HCT116 (cell line): ENCODE measurements at regions of chr11 and their contacts with region 1.

Region 1: GRCh38 chr11:8099291-8099899 is 18.4 kb downstream of the TUB start:
- DNase-seq: peak; percentile 68
- ATAC-seq: peak; percentile 94
- H3K4me3 ChIP-seq: no peak overlapping the region
- H3K27ac ChIP-seq: no peak overlapping the region
- H3K4me1 ChIP-seq: no peaks in the 10 kb centered on the region
- H3K27me3 ChIP-seq: no peaks in the 10 kb centered on the region
- CTCF ChIP-seq: peak; percentile 79 to 90 (median 84)
- POLR2A ChIP-seq: no peak
- RAD21 ChIP-seq: peak; percentile 90

Region 2: DNA sequence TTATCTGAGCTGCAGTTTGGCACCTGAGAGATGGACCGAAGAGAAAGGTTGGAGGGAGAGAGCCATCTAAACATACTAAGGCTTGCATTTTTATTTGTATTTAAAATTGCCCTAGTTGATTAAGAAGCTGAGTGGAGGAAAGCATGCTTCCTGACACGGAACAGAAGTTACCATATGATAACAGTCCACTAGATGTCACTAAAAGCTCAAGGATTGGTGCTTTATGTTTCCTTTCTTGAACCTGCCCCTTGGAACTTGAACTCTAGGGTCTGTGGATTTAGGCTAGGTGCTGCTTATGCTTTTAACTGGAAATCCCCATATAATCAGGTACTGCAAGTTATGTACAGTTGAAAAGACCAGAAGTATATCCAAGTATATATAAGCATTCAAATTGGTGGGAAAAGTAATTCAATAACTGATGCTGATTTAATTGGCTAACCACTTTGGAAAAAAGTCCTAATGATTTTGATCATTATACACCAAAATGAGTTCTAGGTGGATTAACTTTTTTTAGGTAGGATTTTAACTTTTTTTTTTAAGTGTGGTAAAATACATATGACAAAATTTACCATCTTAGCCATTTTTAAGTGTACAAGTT is 1001.1 kb before region 1 on chr11:
- CTCF ChIA-PET with region 1: no interaction called
- POLR2A ChIA-PET with region 1: no interaction called
- RAD21 ChIA-PET with region 1: no interaction called
- intact Hi-C with region 1: loop called (anchors 10 kb)
- DNase-seq: peak; percentile 50
- ATAC-seq: peak; percentile 91
- H3K4me3 ChIP-seq: no peak overlapping the region
- H3K27ac ChIP-seq: no peak overlapping the region
- H3K4me1 ChIP-seq: no peaks in the 10 kb centered on the region
- H3K27me3 ChIP-seq: peaks cover 59% of the 10 kb centered on the region
- CTCF ChIP-seq: peak; percentile 46 to 74 (median 72)
- POLR2A ChIP-seq: no peak
- RAD21 ChIP-seq: peak; percentile 91

Region 3: GRCh38 chr11:7892840-7893254 is 206.5 kb before region 1 on chr11:
- CTCF ChIA-PET with region 1: interaction called, 5 read pairs
- POLR2A ChIA-PET with region 1: no interaction called
- RAD21 ChIA-PET with region 1: no interaction called
- intact Hi-C with region 1: loop called (anchors 10 kb)
- DNase-seq: peak; percentile 22
- ATAC-seq: peak; percentile 90
- H3K4me3 ChIP-seq: no peak overlapping the region
- H3K27ac ChIP-seq: no peak overlapping the region
- H3K4me1 ChIP-seq: no peaks in the 10 kb centered on the region
- H3K27me3 ChIP-seq: peaks cover 30% of the 10 kb centered on the region
- CTCF ChIP-seq: peak; percentile 62 to 73 (median 70); a peak in 5 of 6 replicates
- POLR2A ChIP-seq: no peak
- RAD21 ChIP-seq: peak; percentile 73

Region 4: GRCh38 chr11:7927635-7928034 is 171.8 kb before region 1 on chr11:
- CTCF ChIA-PET with region 1: no interaction called
- POLR2A ChIA-PET with region 1: no interaction called
- RAD21 ChIA-PET with region 1: no interaction called
- intact Hi-C with region 1: no loop called
- DNase-seq: no peak
- ATAC-seq: no peak
- H3K4me3 ChIP-seq: no peak overlapping the region
- H3K27ac ChIP-seq: no peak overlapping the region
- H3K4me1 ChIP-seq: no peaks in the 10 kb centered on the region
- H3K27me3 ChIP-seq: peaks cover 11% of the 10 kb centered on the region
- CTCF ChIP-seq: no peak
- POLR2A ChIP-seq: no peak
- RAD21 ChIP-seq: no peak

Region 5: GRCh38 chr11:8006349-8006977 is 92.9 kb before region 1 on chr11:
- CTCF ChIA-PET with region 1: interaction called, 184 read pairs
- POLR2A ChIA-PET with region 1: interaction called, 6 read pairs
- RAD21 ChIA-PET with region 1: interaction called, 28 to 31 read pairs
- intact Hi-C with region 1: loop called (anchors 1 kb)
- DNase-seq: peak; percentile 54
- ATAC-seq: peak; percentile 97
- H3K4me3 ChIP-seq: no peak overlapping the region
- H3K27ac ChIP-seq: no peak overlapping the region
- H3K4me1 ChIP-seq: no peaks in the 10 kb centered on the region
- H3K27me3 ChIP-seq: no peaks in the 10 kb centered on the region
- CTCF ChIP-seq: peak; percentile 86 to 91 (median 91)
- POLR2A ChIP-seq: no peak
- RAD21 ChIP-seq: peak; percentile 96

Region 6: GRCh38 chr11:8219257-8220021 is 120.0 kb after region 1 on chr11:
- CTCF ChIA-PET with region 1: no interaction called
- POLR2A ChIA-PET with region 1: no interaction called
- RAD21 ChIA-PET with region 1: no interaction called
- intact Hi-C with region 1: no loop called
- DNase-seq: peak; percentile 50
- ATAC-seq: peak; percentile 97
- H3K4me3 ChIP-seq: no peak overlapping the region
- H3K27ac ChIP-seq: no peak overlapping the region
- H3K4me1 ChIP-seq: no peaks in the 10 kb centered on the region
- H3K27me3 ChIP-seq: no peaks in the 10 kb centered on the region
- CTCF ChIP-seq: peak; percentile 46 to 88 (median 73); a peak in 5 of 6 replicates
- POLR2A ChIP-seq: no peak
- RAD21 ChIP-seq: peak; percentile 61

Region 7: DNA sequence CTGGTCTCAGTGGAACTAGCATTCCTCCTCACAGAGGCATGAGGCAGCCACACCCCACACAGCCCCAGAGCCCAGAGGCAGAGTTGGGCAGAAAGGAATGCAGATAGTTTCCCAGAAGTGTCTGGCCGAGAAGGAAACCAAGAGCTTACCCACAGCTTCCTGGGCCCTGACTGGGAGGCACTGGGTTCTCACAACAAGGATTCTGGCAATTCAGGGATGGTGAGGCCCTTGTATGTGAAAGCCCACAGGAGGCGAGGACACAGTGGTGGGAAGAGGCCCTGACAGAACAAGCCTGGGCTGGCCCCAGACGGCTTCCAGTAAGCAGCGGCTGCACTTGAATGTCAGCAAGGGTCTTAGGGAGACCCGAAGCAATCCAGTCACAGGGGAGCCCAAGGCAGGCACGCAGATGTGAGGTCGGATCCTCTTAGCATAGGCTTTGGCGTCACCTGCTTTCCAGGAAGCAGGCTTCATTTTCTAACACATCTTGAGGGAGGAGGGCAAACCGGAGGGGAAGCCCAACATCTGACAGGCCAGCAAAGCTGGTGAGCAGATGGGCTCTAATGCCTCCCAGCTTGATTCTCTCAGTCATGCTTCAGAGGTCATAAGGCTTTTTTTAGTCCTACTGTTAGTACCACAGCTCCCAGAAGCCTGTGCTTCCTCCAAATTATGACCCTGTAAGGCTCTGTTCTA is 733.3 kb after region 1 on chr11:
- CTCF ChIA-PET with region 1: no interaction called
- POLR2A ChIA-PET with region 1: no interaction called
- RAD21 ChIA-PET with region 1: no interaction called
- intact Hi-C with region 1: no loop called
- DNase-seq: no peak
- ATAC-seq: peak; percentile 67
- H3K4me3 ChIP-seq: no peak overlapping the region
- H3K27ac ChIP-seq: peak overlapping the region; percentile 28; the same call in 1 of the 2 replicates
- H3K4me1 ChIP-seq: peaks cover 6 to 13% of the 10 kb centered on the region in 2 experiments
- H3K27me3 ChIP-seq: no peaks in the 10 kb centered on the region
- CTCF ChIP-seq: no peak
- POLR2A ChIP-seq: no peak
- RAD21 ChIP-seq: no peak

Region 8: DNA sequence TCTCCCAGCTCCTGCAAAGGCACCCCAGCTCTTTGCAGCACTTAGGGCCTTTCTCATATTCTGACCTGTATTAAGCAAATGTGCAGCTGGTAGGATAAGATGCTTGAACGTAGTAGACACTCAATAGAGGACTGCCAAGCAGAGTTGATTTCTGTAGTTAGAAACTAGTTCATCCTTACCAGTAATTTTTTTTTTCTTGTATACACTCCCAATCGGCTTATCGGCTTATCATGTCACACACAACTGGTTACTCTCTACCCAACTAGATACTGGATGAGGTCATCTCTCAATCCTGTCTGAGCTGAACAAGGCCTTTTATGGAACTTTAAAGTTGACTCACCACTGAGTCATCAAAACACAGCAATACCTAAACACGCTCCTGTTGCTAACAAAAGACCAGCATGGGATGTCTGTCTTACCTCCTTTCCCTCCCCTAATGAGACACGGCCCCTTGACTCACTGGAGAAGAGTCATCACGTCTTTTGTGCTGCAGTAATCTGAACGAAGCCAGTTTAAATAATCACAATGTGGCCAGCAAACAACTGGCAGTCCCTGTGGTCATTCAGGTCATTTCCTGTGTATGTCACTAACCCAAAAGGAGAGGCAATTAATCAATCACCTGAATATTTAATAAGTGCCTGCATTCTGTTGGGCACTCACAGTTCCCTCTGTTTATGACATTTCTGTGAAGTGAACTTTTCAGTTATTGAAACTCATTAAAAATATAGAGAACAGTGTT is 1466.6 kb after region 1 on chr11:
- CTCF ChIA-PET with region 1: no interaction called
- POLR2A ChIA-PET with region 1: no interaction called
- RAD21 ChIA-PET with region 1: no interaction called
- intact Hi-C with region 1: no loop called
- DNase-seq: peak; percentile 100
- ATAC-seq: peak; percentile 91
- H3K4me3 ChIP-seq: peak overlapping the region; percentile 11 to 20; a peak in 3 of 4 replicates
- H3K27ac ChIP-seq: peak overlapping the region; percentile 57
- H3K4me1 ChIP-seq: peaks cover 41 to 69% of the 10 kb centered on the region in 2 experiments
- H3K27me3 ChIP-seq: no peaks in the 10 kb centered on the region
- CTCF ChIP-seq: no peak
- POLR2A ChIP-seq: no peak
- RAD21 ChIP-seq: peak; percentile 34